Heart left ventricle (tissue), 16 donors: ENCODE measurements at regions of chr1 and their contacts with region 1.

Region 1: DNA sequence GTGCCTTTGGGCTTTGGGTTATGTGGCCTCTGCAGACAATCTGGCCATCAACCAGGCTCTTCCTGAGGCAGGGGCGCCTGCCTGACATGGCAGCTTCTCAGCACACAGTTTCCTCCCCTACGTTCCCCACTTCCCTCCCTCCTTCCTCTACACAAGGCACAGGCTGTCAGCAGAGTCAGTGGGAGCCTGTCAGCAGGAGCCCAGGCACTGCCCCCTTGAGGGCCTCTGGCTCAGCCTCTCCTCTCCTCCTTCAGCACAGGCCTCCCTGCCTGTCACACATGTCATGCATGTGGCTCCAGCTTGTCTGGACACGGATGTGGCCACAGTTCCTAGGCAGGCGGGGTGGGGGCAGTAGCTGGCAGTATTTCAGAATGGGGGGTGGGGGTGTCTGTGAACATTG is 52.2 kb upstream of the ARTN start:
- DNase-seq: peak in 2 of 5 donors; percentile 46 to 76
- ATAC-seq: peak; percentile 44 to 76 (median 70)
- H3K4me3 ChIP-seq: no peak overlapping the region
- H3K27ac ChIP-seq: peak overlapping the region; percentile 16 to 87 (median 74)
- H3K4me1 ChIP-seq: peaks cover 0 to 27% (median 5%) of the 10 kb centered on the region in 12 donors
- H3K27me3 ChIP-seq: no peaks in the 10 kb centered on the region
- CTCF ChIP-seq: peak in 2 of 12 donors; percentile 15 to 27
- POLR2A ChIP-seq: no peak

Region 2: GRCh38 chr1:43783671-43784205 is 97.7 kb before region 1 on chr1:
- intact Hi-C with region 1: loop called in 1 of 10 experiments (anchors 5 kb)
- DNase-seq: no peak
- ATAC-seq: peak in 3 of 4 donors; percentile 36 to 56 (median 50)
- H3K4me3 ChIP-seq: no peak overlapping the region
- H3K27ac ChIP-seq: peak overlapping the region in 3 of 12 donors; percentile 24 to 63 (median 28)
- H3K4me1 ChIP-seq: peaks cover 0 to 47% (median 22%) of the 10 kb centered on the region in 12 donors
- H3K27me3 ChIP-seq: no peaks in the 10 kb centered on the region
- CTCF ChIP-seq: no peak
- POLR2A ChIP-seq: no peak